Spleen (tissue), 13 donors: ENCODE measurements at regions of chr2 and their contacts with region 1.

Region 1: GRCh38 chr2:137900421-137901141 is 63.7 kb upstream of the HNMT start:
- DNase-seq: no peak
- H3K4me3 ChIP-seq: no peak overlapping the region
- H3K27ac ChIP-seq: no peak overlapping the region
- H3K4me1 ChIP-seq: no peaks in the 10 kb centered on the region
- H3K27me3 ChIP-seq: no peaks in the 10 kb centered on the region
- CTCF ChIP-seq: no peak
- POLR2A ChIP-seq: no peak

Region 2: GRCh38 chr2:137826373-137827372 is 73.9 kb before region 1 on chr2:
- intact Hi-C with region 1: no loop called
- DNase-seq: no peak
- H3K4me3 ChIP-seq: no peak overlapping the region
- H3K27ac ChIP-seq: no peak overlapping the region
- H3K4me1 ChIP-seq: no peaks in the 10 kb centered on the region
- H3K27me3 ChIP-seq: no peaks in the 10 kb centered on the region
- CTCF ChIP-seq: no peak
- POLR2A ChIP-seq: no peak

Region 3: DNA sequence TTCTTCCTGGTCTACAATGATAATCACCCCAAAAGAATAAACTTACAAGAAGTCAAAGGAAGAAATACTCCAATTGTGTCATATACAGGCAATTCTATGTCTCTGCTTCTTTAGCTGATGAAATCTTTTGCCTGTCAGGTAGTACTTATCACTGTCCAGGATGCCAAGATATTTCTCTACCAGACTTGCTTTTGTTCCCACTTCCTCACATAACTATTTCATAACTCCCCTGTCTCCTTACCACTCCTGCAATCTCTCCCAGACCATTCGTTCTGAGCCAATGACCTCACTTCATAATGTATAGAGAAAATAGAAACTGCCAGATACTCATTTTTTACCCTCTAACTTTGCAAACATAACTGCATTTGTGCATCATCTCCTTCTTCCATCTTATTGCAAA is 102.8 kb after region 1 on chr2:
- intact Hi-C with region 1: no loop called
- DNase-seq: no peak
- H3K4me3 ChIP-seq: no peak overlapping the region
- H3K27ac ChIP-seq: no peak overlapping the region
- H3K4me1 ChIP-seq: no peaks in the 10 kb centered on the region
- H3K27me3 ChIP-seq: no peaks in the 10 kb centered on the region
- CTCF ChIP-seq: no peak
- POLR2A ChIP-seq: no peak

Region 4: GRCh38 chr2:138787053-138787666 is 886.6 kb after region 1 on chr2:
- intact Hi-C with region 1: loop called (anchors 10 kb)
- DNase-seq: no peak
- H3K4me3 ChIP-seq: no peak overlapping the region
- H3K27ac ChIP-seq: no peak overlapping the region
- H3K4me1 ChIP-seq: no peaks in the 10 kb centered on the region
- H3K27me3 ChIP-seq: peaks cover 0 to 10% (median 0%) of the 10 kb centered on the region in 7 donors
- CTCF ChIP-seq: peak; percentile 8 to 75 (median 64)
- POLR2A ChIP-seq: no peak

Region 5: DNA sequence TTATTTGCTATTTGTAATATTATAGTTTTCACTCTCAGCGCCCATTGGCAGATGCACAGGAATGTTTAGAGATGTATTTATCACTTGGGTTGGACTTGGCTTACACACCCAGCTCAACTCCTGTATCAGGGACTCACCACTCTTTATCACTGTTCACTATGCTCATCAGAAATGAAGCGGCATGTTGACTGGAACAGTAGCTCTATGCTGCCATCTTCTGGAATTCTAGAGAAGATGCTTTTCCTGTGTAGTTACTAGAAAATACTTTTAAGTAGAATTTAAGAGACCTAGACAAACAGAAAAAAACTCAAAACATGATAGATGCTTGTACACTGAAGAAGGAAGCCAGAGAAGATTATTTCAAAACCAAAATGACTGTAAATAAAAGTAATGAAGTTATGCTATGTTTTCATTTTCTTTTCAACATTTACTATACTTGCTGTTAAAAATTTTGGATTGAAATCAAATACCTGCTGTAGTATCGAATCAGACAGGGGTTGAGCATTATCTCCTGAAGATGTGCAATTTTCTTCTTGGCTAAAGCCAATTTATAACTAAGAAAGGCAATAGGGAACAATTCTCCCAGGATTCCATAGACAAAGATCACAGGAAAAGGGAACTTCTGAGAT is 927.0 kb after region 1 on chr2:
- intact Hi-C with region 1: loop called (anchors 10 kb)
- DNase-seq: no peak
- H3K4me3 ChIP-seq: no peak overlapping the region
- H3K27ac ChIP-seq: no peak overlapping the region
- H3K4me1 ChIP-seq: no peaks in the 10 kb centered on the region
- H3K27me3 ChIP-seq: no peaks in the 10 kb centered on the region
- CTCF ChIP-seq: peak in 10 of 11 experiments; percentile 31 to 75 (median 61)
- POLR2A ChIP-seq: no peak